Right lobe of liver (tissue), 6 donors: ENCODE measurements at regions of chr6 and their contacts with region 1.

Region 1: GRCh38 chr6:125314019-125314581 is 12.3 kb upstream of the HDDC2 start:
- DNase-seq: peak; percentile 51 to 72 (median 52)
- ATAC-seq: peak; percentile 73 to 87 (median 80)
- H3K4me3 ChIP-seq: no peak overlapping the region
- H3K27ac ChIP-seq: no peak overlapping the region
- H3K4me1 ChIP-seq: peaks cover 0 to 25% (median 8%) of the 10 kb centered on the region in 4 donors
- H3K27me3 ChIP-seq: no peaks in the 10 kb centered on the region
- CTCF ChIP-seq: peak; percentile 78 to 84 (median 80)
- POLR2A ChIP-seq: no peak

Region 2: DNA sequence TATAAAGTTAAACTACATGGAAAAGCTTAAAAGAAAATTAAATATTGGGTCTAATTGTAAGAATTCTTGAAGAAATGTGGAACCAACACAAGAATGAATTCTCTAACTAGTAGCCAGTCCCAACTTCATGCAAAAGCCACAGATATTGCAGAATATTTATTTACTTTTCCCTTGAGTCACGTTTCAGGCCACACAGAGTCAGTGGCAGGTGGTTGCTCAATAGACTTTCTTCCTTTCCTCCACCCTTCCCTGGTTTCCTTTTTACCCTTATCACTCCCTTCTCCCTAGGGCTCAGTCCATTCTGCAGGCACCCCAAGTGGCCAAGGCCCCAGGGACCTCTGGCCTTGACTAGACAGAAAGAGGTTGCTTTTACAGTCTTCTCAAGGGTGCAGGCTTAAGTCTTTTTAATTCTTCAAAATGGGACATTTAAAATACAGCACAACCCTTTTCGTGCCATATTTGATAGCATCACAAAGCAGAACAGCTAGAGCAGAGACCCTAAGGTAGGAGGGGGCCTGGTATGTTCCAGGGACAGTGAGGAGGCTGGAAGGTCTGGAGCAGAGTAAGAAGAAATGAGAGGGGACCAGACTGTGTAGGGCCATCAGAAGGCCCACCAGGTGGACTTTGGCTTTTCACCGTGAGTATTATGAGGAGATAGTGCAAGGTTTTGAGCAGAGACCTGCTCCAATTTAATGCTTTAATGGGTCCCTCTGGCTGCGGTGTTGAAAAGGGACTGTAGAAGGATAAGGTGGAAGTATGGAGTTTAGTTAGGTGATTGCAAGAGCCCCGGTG is 77.4 kb before region 1 on chr6:
- intact Hi-C with region 1: no loop called
- DNase-seq: no peak
- ATAC-seq: peak in 2 of 4 donors; percentile 53 to 60
- H3K4me3 ChIP-seq: no peak overlapping the region
- H3K27ac ChIP-seq: no peak overlapping the region
- H3K4me1 ChIP-seq: no peaks in the 10 kb centered on the region
- H3K27me3 ChIP-seq: no peaks in the 10 kb centered on the region
- CTCF ChIP-seq: no peak
- POLR2A ChIP-seq: no peak

Region 3: GRCh38 chr6:125393449-125393858 is 79.4 kb after region 1 on chr6:
- intact Hi-C with region 1: no loop called
- DNase-seq: no peak
- ATAC-seq: no peak
- H3K4me3 ChIP-seq: no peak overlapping the region
- H3K27ac ChIP-seq: no peak overlapping the region
- H3K4me1 ChIP-seq: no peaks in the 10 kb centered on the region
- H3K27me3 ChIP-seq: no peaks in the 10 kb centered on the region
- CTCF ChIP-seq: no peak
- POLR2A ChIP-seq: no peak

Region 4: GRCh38 chr6:125764121-125764671 is 450.1 kb after region 1 on chr6:
- intact Hi-C with region 1: loop called (anchors 10 kb)
- DNase-seq: no peak
- ATAC-seq: no peak
- H3K4me3 ChIP-seq: no peak overlapping the region
- H3K27ac ChIP-seq: no peak overlapping the region
- H3K4me1 ChIP-seq: no peaks in the 10 kb centered on the region
- H3K27me3 ChIP-seq: no peaks in the 10 kb centered on the region
- CTCF ChIP-seq: no peak
- POLR2A ChIP-seq: no peak